Left ventricle myocardium superior (tissue), 1 donor: ENCODE measurements at regions of chr3 and their contacts with region 1.

Region 1: GRCh38 chr3:168094877-168095610 is 680 bp downstream of the GOLIM4 start:
- DNase-seq: peak; percentile 80
- ATAC-seq: peak; percentile 45

Region 2: DNA sequence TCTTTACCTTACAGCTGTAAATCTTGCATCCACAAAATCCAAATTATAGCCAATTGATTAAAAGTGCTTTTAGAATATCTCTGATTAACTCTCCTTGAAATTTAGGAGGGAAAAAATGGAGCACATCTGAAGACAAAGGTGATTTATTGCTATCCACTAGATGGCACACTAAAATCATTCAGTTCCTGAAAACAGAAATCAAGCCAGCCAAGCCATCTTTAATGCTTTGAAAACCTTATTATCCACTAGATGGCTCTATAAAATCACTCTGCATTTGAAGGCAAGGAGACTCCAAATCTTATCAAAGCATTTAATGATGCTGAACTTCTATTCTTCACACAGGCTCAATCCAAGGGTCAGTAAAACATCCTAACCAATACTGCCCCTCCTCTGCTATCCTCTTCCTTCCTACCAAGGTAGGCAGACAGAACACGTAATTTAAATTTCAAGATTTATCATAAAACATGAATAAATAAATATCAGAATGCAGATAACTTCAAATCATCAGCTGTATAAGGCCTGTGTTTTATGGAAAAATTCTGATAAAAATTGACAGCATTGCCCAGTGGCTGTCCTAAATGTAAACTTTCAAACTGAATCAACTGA is 47.8 kb before region 1 on chr3:
- intact Hi-C with region 1: loop called (anchors 5 kb)
- DNase-seq: no peak
- ATAC-seq: peak; percentile 61